GM13977 (cell line): ENCODE measurements at regions of chr9 and their contacts with region 1.

Region 1: DNA sequence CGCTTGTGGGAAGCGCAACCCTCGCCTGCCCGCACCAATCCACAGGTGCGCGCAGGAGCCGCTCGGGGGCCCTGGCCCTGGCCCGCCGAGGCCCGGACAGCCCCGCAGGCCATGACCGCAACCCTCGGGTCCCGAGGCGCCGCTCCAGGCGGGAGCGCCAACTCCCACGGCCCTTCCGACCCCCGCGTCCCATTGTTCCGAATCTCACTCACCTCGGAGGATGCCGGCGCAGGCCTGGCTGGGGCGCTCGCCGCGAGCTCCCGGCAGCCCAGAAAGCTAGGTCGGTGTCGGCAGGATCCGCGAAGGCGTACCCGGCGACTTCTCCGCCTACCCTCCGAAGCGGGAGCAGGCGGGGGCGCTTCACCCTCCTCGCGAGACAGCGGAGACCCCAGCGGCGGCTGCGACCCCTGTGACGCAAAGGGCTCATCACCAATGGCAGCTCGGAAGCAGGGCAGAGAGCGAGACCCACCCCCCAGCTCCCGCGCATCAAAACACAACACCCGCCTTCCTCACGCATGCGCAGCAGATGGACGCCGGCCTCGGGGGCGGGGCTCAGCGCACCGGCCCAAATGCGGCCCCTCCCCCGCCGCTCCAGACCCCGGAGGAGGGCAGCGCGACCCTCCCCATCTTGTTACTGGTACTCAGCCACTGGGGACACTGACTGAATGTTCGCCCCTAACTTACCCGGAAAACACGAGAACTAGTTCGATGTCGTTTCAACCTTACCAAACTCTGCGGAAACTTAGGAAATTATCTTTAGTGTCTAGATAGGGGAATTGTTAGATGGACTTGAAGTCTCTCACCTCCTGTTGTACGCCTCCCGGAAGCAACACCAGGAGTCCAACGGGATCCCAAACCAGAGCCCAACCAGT is 1.3 kb upstream of the SMIM27 start:
- DNase-seq: peak; percentile 98
- CTCF ChIP-seq: no peak

Region 2: DNA sequence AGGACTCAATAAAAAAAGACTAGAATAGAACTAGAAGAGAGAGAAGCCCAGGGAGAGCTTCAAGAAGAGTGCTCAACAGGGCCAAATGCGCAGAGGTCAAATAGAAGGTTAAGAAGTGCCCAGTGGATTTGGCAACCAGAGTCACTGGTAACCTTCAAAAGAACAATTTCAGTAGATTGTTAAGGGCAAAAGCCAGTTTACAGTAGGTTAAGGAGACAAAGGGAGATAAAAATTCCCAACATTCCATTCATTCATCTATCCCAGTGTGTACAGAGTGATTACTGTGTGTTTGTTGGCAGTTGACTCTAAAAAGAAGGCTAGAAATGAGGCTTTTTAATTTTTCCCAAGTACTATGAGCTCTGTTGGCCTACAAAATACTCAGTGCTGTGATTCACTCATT is 94.2 kb before region 1 on chr9:
- in situ Hi-C with region 1: loop called (anchors 25 kb)
- DNase-seq: no peak
- CTCF ChIP-seq: no peak